Activated B cell treated with CpG ODN at 0.5 μM for 24 hours (primary cell): ENCODE measurements at regions of chr12 and their contacts with region 1.

Region 1: GRCh38 chr12:19482551-19483109 is 43.3 kb downstream of the AEBP2 start:
- DNase-seq: no peak
- ATAC-seq: peak; percentile 75
- H3K4me3 Mint-ChIP-seq: peak overlapping the region; percentile 21
- H3K27ac Mint-ChIP-seq: peak overlapping the region; percentile 56
- H3K4me1 Mint-ChIP-seq: peaks cover 31% of the 10 kb centered on the region
- H3K27me3 Mint-ChIP-seq: no peaks in the 10 kb centered on the region
- CTCF ChIP-seq: no peak

Region 2: DNA sequence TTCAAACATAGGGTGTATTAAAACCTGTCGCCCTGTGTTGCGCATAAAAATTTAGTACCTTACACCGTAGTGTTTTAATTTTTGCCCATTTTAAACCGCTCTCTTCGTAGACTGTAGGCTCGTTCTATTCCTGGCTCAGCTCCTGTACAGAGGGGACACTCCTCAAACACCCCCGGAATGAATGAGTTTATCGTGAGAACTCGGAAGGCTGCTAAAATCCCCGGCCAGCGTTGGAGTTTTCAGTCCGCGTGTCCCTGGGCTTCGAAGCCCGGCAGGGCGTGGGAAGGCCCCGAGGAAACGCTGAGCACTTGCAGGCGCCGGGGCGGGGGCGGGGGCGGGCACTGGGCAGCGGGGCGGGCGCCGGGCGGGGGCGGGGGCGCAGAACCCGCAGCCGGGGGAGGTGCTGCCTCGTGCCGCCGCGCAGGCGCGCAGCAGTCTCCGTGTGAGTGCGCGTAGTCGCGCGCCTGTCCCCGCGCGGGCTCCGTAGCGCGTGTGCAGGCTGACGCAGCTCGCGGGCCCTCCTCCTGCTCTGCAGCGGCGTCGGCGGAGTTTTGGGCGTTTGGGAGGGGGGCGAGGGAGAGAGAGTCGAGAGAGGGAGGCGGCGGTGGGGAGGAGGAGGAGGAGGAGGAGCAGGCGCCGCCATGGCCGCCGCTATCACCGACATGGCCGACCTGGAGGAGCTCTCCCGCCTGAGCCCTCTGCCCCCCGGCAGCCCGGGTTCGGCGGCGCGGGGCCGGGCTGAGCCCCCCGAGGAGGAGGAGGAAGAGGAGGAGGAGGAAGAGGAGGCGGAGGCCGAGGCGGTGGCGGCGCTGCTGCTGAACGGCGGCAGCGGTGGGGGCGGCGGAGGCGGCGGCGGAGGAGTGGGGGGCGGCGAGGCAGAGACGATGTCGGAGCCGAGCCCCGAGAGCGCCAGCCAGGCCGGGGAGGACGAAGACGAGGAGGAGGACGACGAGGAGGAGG is 43.3 kb before region 1 on chr12 and contains the start of gene AEBP2:
- CTCF ChIA-PET with region 1: no interaction called
- POLR2A ChIA-PET with region 1: no interaction called
- intact Hi-C with region 1: loop called (anchors 5 kb)
- DNase-seq: peak; percentile 84
- ATAC-seq: peak; percentile 91
- H3K4me3 Mint-ChIP-seq: peak within 1 kb of the TSS; percentile 99
- H3K27ac Mint-ChIP-seq: peak within 1 kb of the TSS; percentile 92
- H3K4me1 Mint-ChIP-seq: peaks cover 37% of the 10 kb centered on the region
- H3K27me3 Mint-ChIP-seq: no peaks in the 10 kb centered on the region
- CTCF ChIP-seq: no peak
- total RNA-seq, gene AEBP2: 44.8 and 51.0 TPM in 2 replicates